Mammary epithelial cell (primary cell): ENCODE measurements at regions of chr22 and their contacts with region 1.

Region 1: GRCh38 chr22:45502215-45503049 is at the start of gene FBLN1:
- DNase-seq: no peak
- H3K4me3 ChIP-seq: peak within 1 kb of the TSS; percentile 55 to 72 (median 69)
- H3K27ac ChIP-seq: peak within 1 kb of the TSS; percentile 22
- H3K4me1 ChIP-seq: peaks cover 22% of the 10 kb centered on the region
- H3K27me3 ChIP-seq: no peaks in the 10 kb centered on the region
- CTCF ChIP-seq: peak in 1 of 2 donors; percentile 38
- total RNA-seq, gene FBLN1: 130 to 173 TPM

Region 2: GRCh38 chr22:45317551-45318167 is 184.8 kb before region 1 on chr22:
- CTCF ChIA-PET with region 1: no interaction called
- dilution Hi-C with region 1: no loop called
- in situ Hi-C with region 1: no loop called
- intact Hi-C with region 1: loop called (anchors 1 kb)
- DNase-seq: peak; percentile 70
- H3K4me3 ChIP-seq: peak overlapping the region in 1 of 3 experiments; percentile 11
- H3K27ac ChIP-seq: peak overlapping the region; percentile 71
- H3K4me1 ChIP-seq: peaks cover 26% of the 10 kb centered on the region
- H3K27me3 ChIP-seq: no peaks in the 10 kb centered on the region
- CTCF ChIP-seq: peak; percentile 44 to 65

Region 3: DNA sequence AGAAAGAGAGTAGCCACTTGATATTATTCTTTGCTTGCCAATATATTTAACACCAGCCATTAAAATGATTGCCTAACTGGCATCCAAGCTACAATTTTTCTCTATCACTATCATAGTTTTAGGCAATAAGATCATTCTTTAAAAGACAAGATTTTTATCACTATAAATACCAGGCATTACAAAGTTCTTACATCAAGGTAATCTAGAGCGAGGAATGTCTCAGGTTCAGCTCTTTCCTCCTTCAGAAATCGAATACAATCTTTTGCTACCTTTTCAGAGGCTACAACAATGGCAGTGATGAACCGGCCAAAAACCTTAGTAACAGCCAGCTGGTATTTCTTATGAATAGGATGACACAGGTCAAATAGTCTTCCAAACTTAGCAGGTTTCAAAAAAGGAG is 112.9 kb before region 1 on chr22:
- CTCF ChIA-PET with region 1: no interaction called
- dilution Hi-C with region 1: no loop called
- in situ Hi-C with region 1: no loop called
- intact Hi-C with region 1: no loop called
- DNase-seq: no peak
- H3K4me3 ChIP-seq: no peak overlapping the region
- H3K27ac ChIP-seq: no peak overlapping the region
- H3K4me1 ChIP-seq: no peaks in the 10 kb centered on the region
- H3K27me3 ChIP-seq: no peaks in the 10 kb centered on the region
- CTCF ChIP-seq: no peak

Region 4: DNA sequence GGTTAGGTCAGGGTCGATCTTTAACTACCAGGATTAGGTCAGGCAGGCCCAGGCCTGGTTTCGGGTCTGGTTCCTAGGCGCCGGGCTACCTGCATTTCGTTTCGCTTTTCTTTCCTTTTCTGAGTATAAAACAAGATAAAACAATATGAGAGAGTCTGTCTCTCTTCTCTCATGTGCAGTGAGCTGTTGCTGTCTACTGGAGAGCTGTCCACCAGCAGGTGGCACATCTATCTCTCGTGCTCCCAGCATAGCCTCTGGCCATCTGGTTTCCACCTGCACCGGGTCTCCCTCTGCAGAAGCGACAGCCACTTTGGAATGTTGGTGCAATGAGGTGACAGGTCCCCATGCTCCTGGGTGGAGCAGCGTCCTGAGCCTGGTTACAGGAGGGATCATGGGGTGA is 61.3 kb before region 1 on chr22:
- CTCF ChIA-PET with region 1: no interaction called
- dilution Hi-C with region 1: no loop called
- in situ Hi-C with region 1: no loop called
- intact Hi-C with region 1: loop called (anchors 2 kb)
- DNase-seq: peak; percentile 46
- H3K4me3 ChIP-seq: no peak overlapping the region
- H3K27ac ChIP-seq: no peak overlapping the region
- H3K4me1 ChIP-seq: no peaks in the 10 kb centered on the region
- H3K27me3 ChIP-seq: no peaks in the 10 kb centered on the region
- CTCF ChIP-seq: peak; percentile 55 to 79